Common myeloid progenitor, CD34-positive (primary cell): ENCODE measurements at regions of chr19 and their contacts with region 1.

Region 1: DNA sequence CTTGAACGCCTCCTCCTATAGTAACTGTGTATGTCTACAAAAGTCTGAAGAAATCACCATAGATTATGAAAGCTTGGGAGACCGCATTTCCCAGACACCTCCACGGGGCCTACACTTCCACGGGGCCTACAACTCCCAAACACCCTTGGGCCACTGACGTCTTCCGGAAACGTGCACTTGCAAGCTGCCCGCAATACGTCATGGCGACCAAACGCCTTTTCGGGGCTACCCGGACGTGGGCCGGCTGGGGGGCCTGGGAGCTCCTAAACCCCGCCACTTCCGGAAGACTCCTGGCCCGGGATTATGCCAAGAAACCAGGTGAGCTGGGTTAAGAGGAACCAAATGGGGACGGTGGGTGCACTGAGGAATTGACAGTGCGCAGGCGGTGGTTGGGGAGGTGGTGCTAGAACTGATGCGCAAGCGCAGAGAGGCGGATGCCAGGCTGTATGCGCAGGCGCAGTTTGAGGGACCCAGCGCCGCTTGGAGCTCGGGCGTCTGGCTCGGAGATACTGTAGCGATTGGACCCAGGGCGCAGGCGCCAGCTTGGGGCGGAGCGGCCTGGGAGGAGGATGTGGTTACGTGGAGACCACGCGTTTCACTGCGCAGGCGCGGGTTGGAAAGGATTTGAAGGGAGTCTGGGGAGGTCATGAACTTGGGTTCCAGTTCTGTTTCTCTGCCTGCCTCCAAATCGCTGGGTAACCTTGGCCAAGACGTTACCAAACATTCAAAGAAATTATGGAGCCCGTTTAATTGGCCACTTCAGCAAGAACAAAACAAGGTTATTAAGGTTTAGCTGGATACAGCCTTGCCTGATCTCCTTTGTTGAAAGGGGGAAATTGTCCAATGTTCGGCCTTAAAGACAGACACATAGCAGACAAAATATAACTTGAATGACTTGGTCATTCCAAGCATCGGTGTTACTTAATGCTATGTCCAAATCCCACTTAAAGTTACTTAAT is at the start of gene MRPL54:
- DNase-seq: peak; percentile 99
- H3K4me3 ChIP-seq: peak within 1 kb of the TSS; percentile 80 to 97 (median 92)
- H3K27ac ChIP-seq: peak within 1 kb of the TSS; percentile 99 to 100
- H3K4me1 ChIP-seq: peaks cover 4 to 20% (median 15%) of the 10 kb centered on the region in 4 experiments
- H3K27me3 ChIP-seq: no peaks in the 10 kb centered on the region

Region 2: GRCh38 chr19:3642987-3643673 is 119.7 kb before region 1 on chr19:
- CTCF ChIA-PET with region 1: no interaction called
- POLR2A ChIA-PET with region 1: no interaction called
- DNase-seq: no peak
- H3K4me3 ChIP-seq: no peak overlapping the region
- H3K27ac ChIP-seq: no peak overlapping the region
- H3K4me1 ChIP-seq: no peaks in the 10 kb centered on the region
- H3K27me3 ChIP-seq: no peaks in the 10 kb centered on the region

Region 3: DNA sequence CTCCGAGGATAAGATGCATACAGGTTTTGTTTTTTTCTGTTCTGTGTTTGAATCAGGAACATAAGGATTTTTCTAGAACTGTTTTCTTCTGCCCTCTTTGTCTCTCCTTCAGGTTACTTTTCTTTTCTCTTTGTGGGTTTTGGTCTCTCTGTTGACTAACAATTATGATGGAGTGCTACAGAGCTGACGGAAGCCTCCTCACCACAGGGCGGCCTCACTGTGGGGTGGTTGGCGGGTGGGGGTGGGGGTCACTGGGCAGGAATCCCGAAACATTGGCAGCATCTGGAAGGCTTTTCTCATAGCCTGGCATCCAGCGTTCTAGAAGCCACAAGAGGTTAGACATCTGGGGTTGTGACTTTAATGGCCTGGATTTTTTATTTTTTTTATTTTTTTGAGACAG is 35.4 kb after region 1 on chr19:
- CTCF ChIA-PET with region 1: interaction called, 3 read pairs
- POLR2A ChIA-PET with region 1: interaction called, 10 read pairs
- DNase-seq: peak; percentile 58 to 83 (median 79)
- H3K4me3 ChIP-seq: no peak overlapping the region
- H3K27ac ChIP-seq: no peak overlapping the region
- H3K4me1 ChIP-seq: peaks cover 0 to 22% (median 14%) of the 10 kb centered on the region in 4 experiments
- H3K27me3 ChIP-seq: peaks cover 0 to 25% (median 9%) of the 10 kb centered on the region in 5 experiments

Region 4: DNA sequence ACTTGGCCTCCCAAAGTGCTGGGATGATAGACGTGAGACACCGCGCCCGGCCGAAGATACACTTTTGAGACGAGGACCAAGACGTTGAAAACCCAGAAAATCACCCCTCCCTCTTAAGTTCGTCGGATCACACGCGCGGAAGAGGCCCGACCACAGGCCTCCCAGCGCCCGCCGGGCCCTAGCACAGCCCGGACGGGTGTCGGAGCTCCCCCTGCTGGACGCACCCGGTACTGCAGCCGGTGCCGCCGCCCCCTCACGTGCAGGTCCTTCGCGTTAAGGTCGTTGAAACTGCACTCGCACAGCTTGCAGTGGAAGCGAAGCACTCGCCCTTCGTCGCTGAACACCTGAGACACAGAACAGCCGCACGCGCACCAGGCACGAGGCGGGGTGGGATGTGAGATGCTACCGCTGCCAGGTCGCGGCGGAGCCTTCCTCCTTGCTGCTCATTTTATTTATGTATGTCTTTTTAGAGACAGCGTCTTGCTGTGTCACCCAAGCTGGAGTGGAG is 59.1 kb after region 1 on chr19:
- CTCF ChIA-PET with region 1: interaction called, 14 read pairs
- POLR2A ChIA-PET with region 1: interaction called, 3 read pairs
- DNase-seq: peak; percentile 85 to 91 (median 89)
- H3K4me3 ChIP-seq: peak overlapping the region in 1 of 7 experiments; percentile 23
- H3K27ac ChIP-seq: no peak overlapping the region
- H3K4me1 ChIP-seq: peaks cover 0 to 34% (median 10%) of the 10 kb centered on the region in 4 experiments
- H3K27me3 ChIP-seq: no peaks in the 10 kb centered on the region